ENCODE measurements at regions of chr1 and their contacts with region 1.

Region 1: GRCh38 chr1:44354840-44355581 is at the start of gene ERI3:
- DNase-seq: peak; percentile 95
- H3K4me3 ChIP-seq: peak within 1 kb of the TSS; percentile 76
- H3K4me3 Mint-ChIP-seq: peak within 1 kb of the TSS; percentile 84
- H3K27ac Mint-ChIP-seq: peak within 1 kb of the TSS; percentile 87
- H3K4me1 ChIP-seq: no peaks in the 10 kb centered on the region
- H3K4me1 Mint-ChIP-seq: peaks cover 6% of the 10 kb centered on the region
- H3K27me3 ChIP-seq: no peaks in the 10 kb centered on the region
- H3K27me3 Mint-ChIP-seq: no peaks in the 10 kb centered on the region
- CTCF ChIP-seq: no peak
- total RNA-seq, gene ERI3: 34.2 and 38.2 TPM in 2 replicates

Region 2: GRCh38 chr1:44108241-44108640 is 246.8 kb before region 1 on chr1:
- CTCF ChIA-PET with region 1: no interaction called
- POLR2A ChIA-PET with region 1: no interaction called
- intact Hi-C with region 1: no loop called
- DNase-seq: no peak
- H3K4me3 ChIP-seq: no peak overlapping the region
- H3K4me3 Mint-ChIP-seq: no peak overlapping the region
- H3K27ac Mint-ChIP-seq: no peak overlapping the region
- H3K4me1 ChIP-seq: no peaks in the 10 kb centered on the region
- H3K4me1 Mint-ChIP-seq: no peaks in the 10 kb centered on the region
- H3K27me3 ChIP-seq: no peaks in the 10 kb centered on the region
- H3K27me3 Mint-ChIP-seq: peaks cover 4% of the 10 kb centered on the region
- CTCF ChIP-seq: no peak

Region 3: DNA sequence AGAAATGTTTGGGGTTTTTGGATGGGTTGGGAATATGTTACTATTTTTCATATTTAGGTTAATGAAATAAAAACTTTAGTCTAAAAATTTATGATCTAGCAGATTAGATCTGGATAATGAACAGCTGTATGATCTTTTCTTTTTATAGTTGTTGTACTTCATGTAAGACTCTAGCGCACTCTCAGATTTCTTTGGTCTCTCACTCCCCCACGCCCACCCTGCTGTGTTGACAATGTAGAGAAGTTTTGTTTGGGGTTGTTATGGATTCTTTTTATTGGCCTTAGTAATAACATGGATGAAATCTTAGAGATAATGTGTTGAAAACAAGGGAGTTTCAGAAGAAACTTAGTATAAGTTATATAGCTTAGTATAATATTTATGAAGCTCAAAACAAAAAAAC is 219.1 kb before region 1 on chr1:
- CTCF ChIA-PET with region 1: no interaction called
- POLR2A ChIA-PET with region 1: no interaction called
- intact Hi-C with region 1: no loop called
- DNase-seq: no peak
- H3K4me3 ChIP-seq: no peak overlapping the region
- H3K4me3 Mint-ChIP-seq: no peak overlapping the region
- H3K27ac Mint-ChIP-seq: no peak overlapping the region
- H3K4me1 ChIP-seq: no peaks in the 10 kb centered on the region
- H3K4me1 Mint-ChIP-seq: peaks cover 6% of the 10 kb centered on the region
- H3K27me3 ChIP-seq: no peaks in the 10 kb centered on the region
- H3K27me3 Mint-ChIP-seq: peaks cover 3% of the 10 kb centered on the region
- CTCF ChIP-seq: no peak

Region 4: GRCh38 chr1:44237721-44238457 is 117.1 kb before region 1 on chr1:
- CTCF ChIA-PET with region 1: no interaction called
- POLR2A ChIA-PET with region 1: no interaction called
- intact Hi-C with region 1: no loop called
- DNase-seq: no peak
- H3K4me3 ChIP-seq: no peak overlapping the region
- H3K4me3 Mint-ChIP-seq: no peak overlapping the region
- H3K27ac Mint-ChIP-seq: no peak overlapping the region
- H3K4me1 ChIP-seq: no peaks in the 10 kb centered on the region
- H3K4me1 Mint-ChIP-seq: no peaks in the 10 kb centered on the region
- H3K27me3 ChIP-seq: no peaks in the 10 kb centered on the region
- H3K27me3 Mint-ChIP-seq: no peaks in the 10 kb centered on the region
- CTCF ChIP-seq: peak in 1 of 2 experiments; percentile 19

Region 5: GRCh38 chr1:44339731-44340130 is 15.3 kb before region 1 on chr1:
- CTCF ChIA-PET with region 1: no interaction called
- POLR2A ChIA-PET with region 1: no interaction called
- intact Hi-C with region 1: loop called (anchors 2 kb)
- DNase-seq: no peak
- H3K4me3 ChIP-seq: no peak overlapping the region
- H3K4me3 Mint-ChIP-seq: no peak overlapping the region
- H3K27ac Mint-ChIP-seq: no peak overlapping the region
- H3K4me1 ChIP-seq: peaks cover 18% of the 10 kb centered on the region
- H3K4me1 Mint-ChIP-seq: peaks cover 23% of the 10 kb centered on the region
- H3K27me3 ChIP-seq: no peaks in the 10 kb centered on the region
- H3K27me3 Mint-ChIP-seq: no peaks in the 10 kb centered on the region
- CTCF ChIP-seq: no peak

Region 6: DNA sequence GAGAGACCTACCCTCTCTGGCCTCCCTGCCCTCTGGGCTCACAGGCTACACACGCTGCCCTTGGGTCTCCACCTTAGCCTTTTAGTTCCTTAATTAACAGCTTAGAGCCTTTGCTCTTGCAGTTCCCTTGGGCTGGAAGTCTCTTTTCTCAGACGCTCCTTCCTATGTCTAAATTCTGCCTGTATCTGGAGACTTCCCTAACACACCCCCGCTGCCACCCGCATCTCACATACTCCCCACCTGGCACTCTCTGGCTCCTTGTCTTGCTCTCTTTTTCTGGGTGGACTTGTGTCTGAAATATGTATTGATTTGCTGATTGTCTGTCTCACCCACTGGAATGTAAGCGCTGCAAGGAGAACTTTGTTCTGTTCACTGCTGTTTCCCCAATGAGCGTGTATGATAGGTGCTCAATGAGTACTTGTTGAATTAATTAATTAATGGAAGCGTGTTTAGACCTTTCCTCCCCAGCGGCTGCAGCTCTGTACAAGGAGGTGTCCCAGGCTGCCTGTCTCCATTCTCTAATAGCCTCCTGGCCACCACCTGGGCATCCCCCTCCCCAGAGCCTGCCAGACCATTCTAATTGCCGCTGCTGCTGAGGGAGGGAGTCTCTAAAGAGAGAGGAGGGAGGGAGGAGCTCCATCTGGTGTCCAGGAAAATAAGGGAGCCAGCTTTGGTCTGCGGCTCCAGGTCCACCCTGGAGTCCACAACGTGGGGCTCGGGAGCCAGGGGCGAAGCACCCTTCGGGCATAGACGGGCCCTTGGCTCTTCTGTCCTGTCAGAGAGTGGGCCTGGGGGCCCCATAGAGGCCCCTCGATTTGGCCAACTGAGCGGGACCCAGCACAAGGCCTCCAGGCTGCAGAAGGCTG is 145.4 kb after region 1 on chr1:
- CTCF ChIA-PET with region 1: no interaction called
- POLR2A ChIA-PET with region 1: no interaction called
- intact Hi-C with region 1: no loop called
- DNase-seq: peak in 1 of 2 experiments; percentile 17
- H3K4me3 ChIP-seq: no peak overlapping the region
- H3K4me3 Mint-ChIP-seq: no peak overlapping the region
- H3K27ac Mint-ChIP-seq: no peak overlapping the region
- H3K4me1 ChIP-seq: no peaks in the 10 kb centered on the region
- H3K4me1 Mint-ChIP-seq: no peaks in the 10 kb centered on the region
- H3K27me3 ChIP-seq: no peaks in the 10 kb centered on the region
- H3K27me3 Mint-ChIP-seq: no peaks in the 10 kb centered on the region
- CTCF ChIP-seq: no peak